ENCODE measurements at regions of chr6 and their contacts with region 1.

Region 1: GRCh38 chr6:3773678-3774296 is 22.3 kb upstream of the PXDC1 start:
- DNase-seq: no peak
- ATAC-seq: no peak
- H3K4me3 Mint-ChIP-seq: no peak overlapping the region
- H3K27ac Mint-ChIP-seq: no peak overlapping the region
- H3K4me1 Mint-ChIP-seq: peaks cover 14% of the 10 kb centered on the region
- H3K27me3 Mint-ChIP-seq: no peaks in the 10 kb centered on the region
- CTCF ChIP-seq: no peak

Region 2: DNA sequence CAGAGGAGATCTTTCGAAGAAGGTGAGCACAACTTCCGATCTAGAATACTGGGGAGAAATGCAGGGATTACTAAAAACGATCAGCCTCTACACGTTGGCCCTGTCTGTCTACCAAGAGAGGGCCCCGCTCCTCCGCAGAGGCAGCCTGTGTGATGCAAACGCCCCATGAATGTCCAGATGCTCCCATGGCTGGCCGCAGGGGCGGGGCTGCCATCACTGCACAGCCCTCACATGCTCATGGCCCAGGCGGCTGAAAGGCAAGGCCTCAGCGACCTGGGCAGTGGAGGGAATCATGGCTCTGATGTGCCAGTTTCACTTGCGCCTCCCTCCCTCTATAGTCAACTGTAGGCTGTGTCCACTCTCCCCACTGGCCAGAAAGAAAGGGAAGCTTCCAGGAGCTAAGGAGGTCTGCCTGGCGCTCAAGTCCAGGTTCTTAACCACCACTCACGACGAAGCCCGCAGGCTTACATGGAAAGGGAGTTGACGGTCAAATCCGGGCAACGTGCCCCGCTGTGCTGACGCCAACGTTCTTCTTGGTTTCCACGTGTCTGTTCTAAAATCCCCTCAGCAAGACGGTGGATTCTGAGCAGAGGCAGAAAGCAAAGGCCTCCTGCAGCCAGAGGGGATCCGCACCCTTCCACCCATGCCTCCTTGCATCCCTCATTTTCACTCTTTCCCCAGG is 36.5 kb before region 1 on chr6:
- CTCF ChIA-PET with region 1: no interaction called
- POLR2A ChIA-PET with region 1: no interaction called
- intact Hi-C with region 1: no loop called
- DNase-seq: no peak
- ATAC-seq: no peak
- H3K4me3 Mint-ChIP-seq: no peak overlapping the region
- H3K27ac Mint-ChIP-seq: no peak overlapping the region
- H3K4me1 Mint-ChIP-seq: peaks cover 4% of the 10 kb centered on the region
- H3K27me3 Mint-ChIP-seq: peaks cover 2% of the 10 kb centered on the region
- CTCF ChIP-seq: no peak

Region 3: DNA sequence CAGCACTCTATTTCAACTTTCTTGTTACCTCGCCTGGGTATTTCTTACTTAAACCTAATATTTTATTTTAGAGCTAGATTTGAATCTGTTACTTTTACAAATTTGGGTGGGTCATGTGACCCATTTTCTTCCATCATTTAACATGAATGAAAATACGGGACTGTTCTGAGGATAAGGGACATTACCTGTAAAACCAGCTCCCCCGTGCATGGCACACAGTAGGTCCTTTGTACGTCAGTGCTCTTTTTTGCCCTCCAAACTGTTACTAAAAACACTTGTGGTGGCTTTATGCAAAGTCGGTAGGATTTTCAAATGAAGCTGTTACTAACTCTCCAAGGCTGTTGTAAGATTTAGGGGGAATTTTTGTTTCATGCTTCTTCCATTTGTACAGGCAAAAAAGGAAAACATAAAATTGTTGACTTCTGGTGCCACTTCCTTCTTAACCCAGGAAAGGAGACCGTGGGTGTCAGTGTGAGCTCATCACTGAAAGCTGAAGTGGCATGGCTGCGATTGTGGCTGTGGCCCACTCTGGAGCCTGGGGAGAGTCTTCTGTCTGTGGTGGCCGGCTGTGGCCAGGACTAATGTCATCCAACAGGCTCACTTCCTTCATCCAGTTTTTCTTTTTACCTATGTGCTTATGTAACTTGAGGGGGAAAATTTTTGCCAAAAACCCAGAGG is 17.9 kb after region 1 on chr6:
- CTCF ChIA-PET with region 1: no interaction called
- POLR2A ChIA-PET with region 1: interaction called, 3 read pairs
- intact Hi-C with region 1: loop called (anchors 2 kb)
- DNase-seq: no peak
- ATAC-seq: no peak
- H3K4me3 Mint-ChIP-seq: no peak overlapping the region
- H3K27ac Mint-ChIP-seq: no peak overlapping the region
- H3K4me1 Mint-ChIP-seq: peaks cover 34% of the 10 kb centered on the region
- H3K27me3 Mint-ChIP-seq: no peaks in the 10 kb centered on the region
- CTCF ChIP-seq: no peak

Region 4: DNA sequence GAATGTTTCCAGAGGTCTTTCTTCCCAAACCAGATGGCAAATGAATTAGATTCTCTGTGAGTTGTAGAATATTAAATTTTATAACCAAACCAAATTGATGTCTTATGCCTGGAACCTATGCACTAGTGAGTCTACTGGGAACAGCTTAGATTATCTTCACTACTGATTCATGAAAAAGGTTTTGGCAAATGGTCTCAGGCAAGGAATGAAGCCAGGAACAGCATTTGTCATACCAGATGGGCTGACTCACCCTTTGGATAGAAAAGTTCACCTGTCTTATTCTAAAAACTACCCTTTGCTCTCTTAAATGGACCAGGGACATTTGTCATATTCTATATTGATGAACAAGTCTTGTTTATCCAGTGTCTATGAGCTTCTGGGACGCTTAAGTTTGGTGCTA is 497.0 kb after region 1 on chr6:
- CTCF ChIA-PET with region 1: no interaction called
- POLR2A ChIA-PET with region 1: no interaction called
- intact Hi-C with region 1: no loop called
- DNase-seq: no peak
- ATAC-seq: no peak
- H3K4me3 Mint-ChIP-seq: no peak overlapping the region
- H3K27ac Mint-ChIP-seq: no peak overlapping the region
- H3K4me1 Mint-ChIP-seq: no peaks in the 10 kb centered on the region
- H3K27me3 Mint-ChIP-seq: peaks cover 10% of the 10 kb centered on the region
- CTCF ChIP-seq: no peak